Activated T-helper 1 cell treated with anti-CD3 and anti-CD28 coated beads, Interleukin-12 subunit alpha, Interleukin-12 subunit beta, Interleukin-2, Interleukin-4 antibody, amounts not matched to agents 30 ng/mL and 10 ng/mL and 1 ng/mL, durations not matched to agents 14 hours and 24 hours and 36 hours (primary cell): ENCODE measurements at regions of chr10 and their contacts with region 1.

Region 1: DNA sequence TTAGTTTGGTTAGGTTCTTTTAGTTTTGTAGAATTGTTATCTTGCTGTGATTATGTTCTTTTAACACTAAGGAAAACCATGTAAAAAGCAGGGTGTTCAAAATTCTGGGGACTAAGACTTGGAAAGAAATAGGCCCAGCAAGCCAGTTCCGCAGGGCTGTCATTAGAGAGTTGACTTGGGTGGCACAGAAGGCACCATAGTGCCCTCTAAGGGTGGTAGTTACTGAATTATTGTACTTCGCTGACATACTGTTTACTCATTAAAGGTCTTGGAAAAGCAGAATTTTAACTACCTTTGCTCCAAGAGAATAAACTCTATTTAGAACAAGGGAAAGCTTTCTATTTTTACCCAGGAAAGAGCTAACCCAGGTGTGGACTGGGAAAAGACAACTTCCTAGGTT is 86.5 kb downstream of the OTUD1 start:
- DNase-seq: no peak
- H3K4me3 Mint-ChIP-seq: no peak overlapping the region
- H3K27ac Mint-ChIP-seq: no peak overlapping the region
- H3K4me1 Mint-ChIP-seq: no peaks in the 10 kb centered on the region
- H3K27me3 Mint-ChIP-seq: peaks cover 2% of the 10 kb centered on the region

Region 2: GRCh38 chr10:22294695-22295094 is 1230.7 kb before region 1 on chr10:
- intact Hi-C with region 1: no loop called
- DNase-seq: no peak
- H3K4me3 Mint-ChIP-seq: no peak overlapping the region
- H3K27ac Mint-ChIP-seq: no peak overlapping the region
- H3K4me1 Mint-ChIP-seq: no peaks in the 10 kb centered on the region
- H3K27me3 Mint-ChIP-seq: peaks cover 19% of the 10 kb centered on the region

Region 3: GRCh38 chr10:23314835-23315239 is 210.6 kb before region 1 on chr10:
- intact Hi-C with region 1: loop called (anchors 1 kb)
- DNase-seq: peak; percentile 29
- H3K4me3 Mint-ChIP-seq: no peak overlapping the region
- H3K27ac Mint-ChIP-seq: no peak overlapping the region
- H3K4me1 Mint-ChIP-seq: peaks cover 5% of the 10 kb centered on the region
- H3K27me3 Mint-ChIP-seq: no peaks in the 10 kb centered on the region

Region 4: DNA sequence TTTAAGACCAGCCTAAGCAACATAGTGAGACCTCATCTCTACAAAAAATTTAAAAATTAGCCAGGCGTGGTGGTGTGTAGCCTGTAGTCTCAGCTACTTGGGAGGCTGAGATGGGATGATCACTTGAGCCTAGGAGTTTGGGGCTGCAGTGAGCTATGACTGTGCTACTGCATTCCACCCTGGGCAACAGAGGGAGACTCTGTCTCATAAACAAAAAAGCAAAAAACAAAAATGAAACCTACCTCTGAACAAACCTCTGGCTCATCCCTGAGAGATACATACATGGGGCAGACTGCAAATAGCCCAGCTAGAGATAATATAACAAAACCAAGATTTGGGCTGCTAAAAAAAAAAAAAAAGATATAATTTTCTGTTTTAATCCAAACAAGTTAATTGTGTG is 200.3 kb before region 1 on chr10:
- intact Hi-C with region 1: loop called (anchors 1 kb)
- DNase-seq: no peak
- H3K4me3 Mint-ChIP-seq: no peak overlapping the region
- H3K27ac Mint-ChIP-seq: no peak overlapping the region
- H3K4me1 Mint-ChIP-seq: peaks cover 6% of the 10 kb centered on the region
- H3K27me3 Mint-ChIP-seq: peaks cover 7% of the 10 kb centered on the region

Region 5: GRCh38 chr10:23408330-23408976 is 117.0 kb before region 1 on chr10:
- intact Hi-C with region 1: no loop called
- DNase-seq: no peak
- H3K4me3 Mint-ChIP-seq: no peak overlapping the region
- H3K27ac Mint-ChIP-seq: no peak overlapping the region
- H3K4me1 Mint-ChIP-seq: peaks cover 15% of the 10 kb centered on the region
- H3K27me3 Mint-ChIP-seq: no peaks in the 10 kb centered on the region

Region 6: DNA sequence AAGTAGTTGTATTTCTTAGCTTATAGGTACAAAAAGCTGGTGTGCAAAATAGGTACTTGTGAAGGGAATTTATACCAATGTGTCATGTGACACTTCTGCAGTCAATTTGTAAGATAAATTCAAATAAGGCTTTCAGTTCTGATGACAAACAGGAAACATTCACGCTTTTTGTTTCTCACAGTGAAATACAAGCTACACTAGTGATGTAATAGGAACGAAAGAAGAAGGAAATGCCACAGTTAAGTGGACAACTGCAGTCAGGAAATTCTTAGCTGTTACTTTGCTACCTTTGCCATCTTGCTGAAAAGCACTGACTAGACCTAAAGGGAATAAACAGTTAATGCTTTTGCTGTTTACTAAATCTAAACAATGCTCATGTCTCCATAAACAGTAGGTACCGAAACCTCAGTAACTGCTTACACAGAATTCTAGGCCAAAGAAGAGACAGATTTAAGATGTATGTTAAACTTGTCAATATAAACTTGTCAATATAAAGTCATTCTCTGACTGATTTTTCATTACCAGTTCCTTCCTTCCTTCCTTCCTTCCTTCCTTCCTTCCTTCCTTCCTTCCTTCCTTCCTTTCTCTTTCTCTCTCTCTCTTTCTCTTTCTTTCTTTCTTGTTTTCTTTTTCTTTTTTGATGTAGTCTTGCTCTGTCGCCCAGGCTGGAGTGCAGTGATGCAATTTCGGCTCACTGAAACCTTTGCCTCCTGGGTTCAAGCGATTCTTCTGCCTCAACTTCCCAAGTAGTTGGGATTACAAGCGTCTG is 76.4 kb before region 1 on chr10:
- intact Hi-C with region 1: loop called (anchors 5 kb)
- DNase-seq: no peak
- H3K4me3 Mint-ChIP-seq: peak overlapping the region; percentile 21
- H3K27ac Mint-ChIP-seq: peak overlapping the region; percentile 88
- H3K4me1 Mint-ChIP-seq: peaks cover 35% of the 10 kb centered on the region
- H3K27me3 Mint-ChIP-seq: no peaks in the 10 kb centered on the region

Region 7: DNA sequence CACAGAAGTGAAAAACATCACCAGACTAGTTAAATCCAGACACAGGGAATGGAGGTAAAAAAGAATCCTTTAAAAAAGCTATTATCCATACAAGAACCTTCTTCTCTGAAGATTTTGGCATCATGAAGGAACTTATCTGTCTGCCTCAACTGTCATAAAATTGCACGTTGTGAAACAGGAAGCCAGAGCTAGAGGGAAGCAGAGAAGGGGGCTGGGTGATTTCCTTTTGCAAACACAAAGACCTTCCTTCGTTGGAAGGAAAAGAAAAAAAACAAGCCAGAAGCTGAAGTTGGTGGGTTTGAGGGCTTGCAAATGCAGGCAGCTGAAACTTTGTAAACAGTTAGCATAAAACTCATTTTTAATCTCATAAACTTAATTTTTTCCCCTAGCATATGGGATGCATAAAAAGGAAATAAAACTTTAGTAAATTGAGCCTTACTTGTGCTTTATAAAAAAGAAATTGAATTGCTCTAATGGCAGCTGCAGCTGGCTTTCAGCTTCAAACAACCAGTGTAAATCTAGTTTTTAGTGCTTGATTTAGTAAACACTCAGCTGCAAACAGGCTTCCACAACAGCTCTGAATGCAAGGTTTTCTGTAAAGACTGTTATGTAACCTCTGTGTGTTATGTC is 15.1 kb after region 1 on chr10:
- intact Hi-C with region 1: no loop called
- DNase-seq: no peak
- H3K4me3 Mint-ChIP-seq: no peak overlapping the region
- H3K27ac Mint-ChIP-seq: no peak overlapping the region
- H3K4me1 Mint-ChIP-seq: peaks cover 37% of the 10 kb centered on the region
- H3K27me3 Mint-ChIP-seq: no peaks in the 10 kb centered on the region

Region 8: GRCh38 chr10:23702977-23703414 is 177.6 kb after region 1 on chr10:
- intact Hi-C with region 1: loop called (anchors 5 kb)
- DNase-seq: peak; percentile 14
- H3K4me3 Mint-ChIP-seq: no peak overlapping the region
- H3K27ac Mint-ChIP-seq: no peak overlapping the region
- H3K4me1 Mint-ChIP-seq: no peaks in the 10 kb centered on the region
- H3K27me3 Mint-ChIP-seq: peaks cover 14% of the 10 kb centered on the region